Body of pancreas (tissue), 4 donors: ENCODE measurements at regions of chr5 and their contacts with region 1.

Region 1: DNA sequence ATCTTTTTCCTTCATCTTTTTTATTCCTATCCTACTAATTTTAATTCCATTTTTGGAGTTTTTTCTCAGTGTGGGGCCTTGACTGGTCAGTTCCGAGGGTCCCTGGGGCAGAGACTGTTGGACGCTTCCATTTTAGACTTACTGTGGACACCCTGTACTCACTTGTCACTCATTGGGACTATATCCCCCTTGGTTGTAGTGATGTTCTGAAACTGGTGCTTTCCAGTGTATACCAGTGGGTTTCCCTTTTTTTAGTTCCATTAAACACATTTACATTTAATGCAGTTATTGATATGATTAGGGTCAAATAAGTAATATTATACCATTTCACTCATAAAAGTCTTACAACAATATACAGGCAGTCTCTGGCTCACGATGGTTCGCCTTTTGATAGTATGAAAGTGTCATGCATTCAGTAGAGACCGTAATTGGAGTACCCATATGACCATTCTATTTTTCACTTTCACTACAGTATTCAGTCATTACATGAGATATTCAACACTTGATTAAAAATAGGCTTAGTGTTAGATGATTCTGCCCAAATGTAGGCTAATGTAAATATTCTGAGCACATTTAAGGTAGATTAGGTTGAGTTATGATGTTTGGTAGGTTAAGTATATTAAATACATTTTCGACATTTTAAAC is 46.0 kb downstream of the CNOT6 start:
- DNase-seq: no peak
- ATAC-seq: no peak
- H3K4me3 ChIP-seq: no peak overlapping the region
- H3K27ac ChIP-seq: no peak overlapping the region
- H3K4me1 ChIP-seq: no peaks in the 10 kb centered on the region
- H3K27me3 ChIP-seq: no peaks in the 10 kb centered on the region
- CTCF ChIP-seq: no peak
- POLR2A ChIP-seq: no peak

Region 2: GRCh38 chr5:180424094-180424493 is 116.1 kb before region 1 on chr5:
- intact Hi-C with region 1: no loop called
- DNase-seq: no peak
- ATAC-seq: no peak
- H3K4me3 ChIP-seq: no peak overlapping the region
- H3K27ac ChIP-seq: no peak overlapping the region
- H3K4me1 ChIP-seq: no peaks in the 10 kb centered on the region
- H3K27me3 ChIP-seq: no peaks in the 10 kb centered on the region
- CTCF ChIP-seq: no peak
- POLR2A ChIP-seq: no peak

Region 3: DNA sequence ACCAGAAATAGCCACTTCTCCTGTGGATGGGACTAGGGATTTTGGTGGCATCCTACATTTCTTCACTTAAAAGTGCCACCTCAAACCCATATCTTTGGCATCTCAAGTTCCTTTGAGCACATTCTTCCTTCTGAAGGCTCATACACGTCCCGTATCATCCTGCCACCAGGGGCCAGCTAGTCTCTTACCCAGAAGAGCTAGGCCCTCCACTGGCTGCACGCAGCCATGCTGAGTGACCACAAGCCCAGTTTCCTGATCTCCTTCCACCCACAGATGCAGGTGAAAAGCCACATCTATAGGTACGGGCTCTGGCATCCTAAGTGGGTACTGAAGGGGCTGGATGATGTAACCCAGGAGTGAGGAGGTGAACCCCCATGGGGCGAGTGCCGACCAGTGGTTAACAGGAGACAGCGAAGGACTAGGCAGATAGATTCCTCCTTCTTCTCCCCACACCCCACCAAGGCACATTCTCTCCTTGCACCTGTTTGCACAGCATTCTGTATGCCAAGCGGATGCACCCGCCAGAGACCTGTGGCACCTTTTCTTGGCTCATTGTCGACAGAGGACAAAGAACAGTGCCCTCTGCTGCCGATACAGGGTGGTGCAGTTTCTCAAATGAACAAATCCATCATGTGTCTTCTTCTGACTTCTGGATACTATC is 65.5 kb after region 1 on chr5:
- intact Hi-C with region 1: loop called (anchors 10 kb)
- DNase-seq: peak; percentile 70 to 81 (median 78)
- ATAC-seq: peak; percentile 66
- H3K4me3 ChIP-seq: no peak overlapping the region
- H3K27ac ChIP-seq: no peak overlapping the region
- H3K4me1 ChIP-seq: no peaks in the 10 kb centered on the region
- H3K27me3 ChIP-seq: no peaks in the 10 kb centered on the region
- CTCF ChIP-seq: peak; percentile 78 to 88 (median 80)
- POLR2A ChIP-seq: no peak

Region 4: GRCh38 chr5:180755601-180756000 is 215.4 kb after region 1 on chr5:
- intact Hi-C with region 1: no loop called
- DNase-seq: no peak
- ATAC-seq: no peak
- H3K4me3 ChIP-seq: no peak overlapping the region
- H3K27ac ChIP-seq: no peak overlapping the region
- H3K4me1 ChIP-seq: no peaks in the 10 kb centered on the region
- H3K27me3 ChIP-seq: no peaks in the 10 kb centered on the region
- CTCF ChIP-seq: no peak
- POLR2A ChIP-seq: no peak

Region 5: DNA sequence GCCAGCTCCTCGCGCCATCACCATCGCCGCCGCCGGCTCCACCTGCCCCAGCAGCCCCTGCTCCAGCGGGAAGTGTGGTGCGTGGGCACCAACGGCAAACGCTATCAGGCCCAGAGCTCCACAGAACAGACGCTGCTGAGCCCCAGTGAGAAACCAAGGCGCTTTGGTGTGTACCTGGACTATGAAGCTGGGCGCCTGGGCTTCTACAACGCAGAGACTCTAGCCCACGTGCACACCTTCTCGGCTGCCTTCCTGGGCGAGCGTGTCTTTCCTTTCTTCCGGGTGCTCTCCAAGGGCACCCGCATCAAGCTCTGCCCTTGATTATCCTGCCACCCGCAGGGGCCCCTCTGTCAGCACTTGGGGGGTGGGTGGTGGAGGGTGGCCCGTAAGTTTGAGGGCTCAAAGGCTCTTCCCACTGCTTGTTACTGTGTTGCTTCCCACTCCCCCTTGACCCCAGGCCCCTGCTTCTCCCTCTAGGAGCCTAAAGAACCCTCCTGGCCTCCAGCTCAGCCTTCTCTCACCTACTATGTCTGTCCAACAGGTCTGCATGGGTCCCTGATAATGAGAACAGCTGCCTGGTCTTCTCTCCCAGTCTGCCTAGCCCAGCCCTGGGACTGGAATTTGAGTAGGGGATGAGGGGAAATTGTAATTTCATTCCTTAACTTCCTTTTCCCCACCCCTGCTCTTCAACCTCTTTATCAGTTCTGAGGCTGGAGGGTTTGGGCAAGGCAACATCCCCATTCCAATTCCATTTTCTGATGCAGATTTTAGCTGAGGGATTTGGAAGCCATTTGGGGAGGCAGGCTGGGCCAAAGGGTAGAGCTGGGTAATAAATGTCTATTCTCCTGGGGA is 694.5 kb after region 1 on chr5:
- intact Hi-C with region 1: no loop called
- DNase-seq: no peak
- ATAC-seq: no peak
- H3K4me3 ChIP-seq: no peak overlapping the region
- H3K27ac ChIP-seq: no peak overlapping the region
- H3K4me1 ChIP-seq: peaks cover 10% of the 10 kb centered on the region
- H3K27me3 ChIP-seq: no peaks in the 10 kb centered on the region
- CTCF ChIP-seq: no peak
- POLR2A ChIP-seq: peak in 1 of 3 donors; percentile 9